Gastrocnemius medialis (tissue), 4 donors: ENCODE measurements at regions of chr17 and their contacts with region 1.

Region 1: DNA sequence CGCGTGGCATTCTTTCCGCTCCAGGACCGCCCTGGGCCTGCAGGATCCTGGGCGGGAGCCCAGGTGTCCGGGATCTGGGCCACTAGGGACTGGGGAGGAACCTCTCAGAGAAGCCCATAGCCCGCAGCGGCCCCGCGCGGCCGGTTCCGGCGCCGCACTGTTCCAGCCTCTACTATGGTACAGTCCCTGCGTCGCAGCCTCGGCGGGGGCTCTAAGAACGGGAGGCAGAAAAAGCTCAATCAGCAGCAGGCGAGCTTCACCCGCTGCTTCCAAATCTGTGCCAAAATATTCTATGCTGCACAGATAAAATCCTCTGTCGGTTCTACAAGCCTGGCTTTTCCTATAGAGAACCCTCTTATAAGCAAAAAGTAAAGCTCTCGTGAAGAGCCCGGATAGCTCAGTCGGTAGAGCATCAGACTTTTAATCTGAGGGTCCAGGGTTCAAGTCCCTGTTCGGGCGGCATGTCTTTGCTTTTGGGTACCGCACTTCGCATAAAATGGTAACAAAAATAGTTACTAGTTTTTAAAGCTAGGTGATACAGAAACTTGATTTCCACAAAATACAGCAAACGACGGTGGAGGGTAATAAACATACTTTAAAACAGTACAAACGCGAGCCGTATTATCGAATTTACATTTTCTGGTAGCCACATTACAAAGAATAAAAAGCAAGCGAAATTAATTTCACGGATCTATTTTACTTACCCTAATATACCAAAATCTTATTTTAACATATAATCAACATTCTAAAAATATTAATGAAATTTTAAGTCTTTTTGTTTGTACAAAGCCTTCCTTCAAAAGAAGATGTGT is 661 bp upstream of the ALOXE3 start:
- DNase-seq: peak; percentile 64 to 89
- ATAC-seq: peak; percentile 74 to 76
- H3K4me3 ChIP-seq: peak overlapping the region; percentile 49 to 63 (median 56)
- H3K27ac ChIP-seq: peak overlapping the region; percentile 76 to 87 (median 84)
- H3K4me1 ChIP-seq: peaks cover 41 to 49% of the 10 kb centered on the region in 2 donors
- H3K27me3 ChIP-seq: peaks cover 33 to 43% (median 38%) of the 10 kb centered on the region in 3 donors
- CTCF ChIP-seq: peak; percentile 89 to 94 (median 93)
- POLR2A ChIP-seq: no peak

Region 2: DNA sequence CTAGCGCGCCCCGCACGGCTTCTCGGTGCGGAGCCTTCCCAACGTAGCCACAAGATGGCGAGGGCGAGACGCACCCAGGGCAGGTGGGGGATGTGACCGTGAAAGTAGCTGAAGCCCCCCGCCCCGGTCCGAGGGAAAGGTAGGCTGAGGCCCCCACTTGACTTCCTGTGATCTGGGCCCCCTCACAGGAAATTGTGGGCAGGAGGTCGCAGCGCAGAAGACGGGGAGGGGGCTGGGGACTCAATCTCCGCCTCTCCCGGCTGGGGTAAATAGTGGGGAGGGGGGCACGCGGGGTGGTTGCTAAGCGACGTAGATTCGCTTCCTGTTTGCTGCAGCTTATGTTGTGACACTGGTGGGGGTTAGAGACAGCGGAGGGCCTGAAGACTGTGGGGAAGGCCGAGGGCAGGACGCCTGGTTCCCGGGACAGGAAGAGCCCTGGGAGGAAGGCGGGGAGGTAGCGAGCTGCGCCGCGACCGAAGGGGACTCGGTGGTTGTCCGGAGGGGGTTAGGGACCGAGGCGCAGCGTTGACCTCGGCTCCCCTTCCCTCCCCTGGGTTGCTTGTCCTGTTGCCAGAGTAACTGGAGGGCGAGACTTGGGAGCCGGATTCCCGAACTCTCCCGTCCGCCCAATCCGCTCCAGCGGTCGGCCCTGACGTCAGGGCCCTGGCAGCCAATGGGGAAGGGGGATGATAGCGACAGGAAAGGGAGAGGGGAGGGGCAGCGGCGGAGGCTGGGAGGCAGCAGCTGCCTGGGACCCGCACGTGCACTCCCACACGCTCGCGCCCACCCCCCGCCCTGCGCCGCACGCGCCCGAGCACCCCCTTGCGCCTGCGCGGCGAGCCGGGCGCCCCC is 283.8 kb before region 1 on chr17:
- in situ Hi-C with region 1: no loop called
- intact Hi-C with region 1: loop called (anchors 5 kb)
- DNase-seq: peak; percentile 97 to 98
- ATAC-seq: peak; percentile 65 to 74
- H3K4me3 ChIP-seq: peak overlapping the region; percentile 81 to 90 (median 85)
- H3K27ac ChIP-seq: peak overlapping the region; percentile 97 to 100 (median 100)
- H3K4me1 ChIP-seq: peaks cover 39 to 44% of the 10 kb centered on the region in 2 donors
- H3K27me3 ChIP-seq: no peaks in the 10 kb centered on the region
- CTCF ChIP-seq: peak; percentile 87 to 96 (median 88)
- POLR2A ChIP-seq: peak; percentile 84 to 94

Region 3: DNA sequence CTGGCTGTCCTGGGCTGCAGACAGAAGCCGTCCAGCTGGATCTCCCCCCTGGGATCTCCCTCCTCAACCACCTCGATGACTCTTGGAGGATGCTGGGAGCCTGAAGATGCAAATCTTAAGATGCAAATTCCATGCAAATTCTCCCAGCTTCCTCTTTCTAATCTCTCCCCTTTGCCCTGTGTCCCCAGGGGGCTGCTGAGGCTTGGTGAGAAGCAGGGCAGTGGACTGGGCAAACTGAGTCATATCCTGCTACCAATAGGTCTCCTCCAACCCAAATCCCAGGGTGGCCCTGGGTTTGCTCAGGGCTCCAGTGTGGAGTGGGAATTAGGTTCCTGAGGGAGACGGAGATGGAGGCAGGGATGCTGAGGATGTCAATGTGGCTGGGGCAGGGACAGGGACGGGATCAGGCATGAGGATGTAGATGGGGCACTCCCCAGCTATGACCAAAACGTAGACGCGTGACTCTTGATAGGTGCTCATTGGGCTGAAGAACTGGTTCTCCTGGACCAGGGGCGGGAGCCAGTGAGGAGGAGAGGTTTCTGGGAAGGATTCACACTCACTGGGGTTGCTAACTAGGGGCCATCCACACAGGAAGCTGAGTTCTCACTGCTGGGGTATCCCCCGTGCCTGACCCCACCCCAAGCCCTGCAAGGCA is 27.8 kb before region 1 on chr17:
- in situ Hi-C with region 1: no loop called
- intact Hi-C with region 1: loop called (anchors 1 kb)
- DNase-seq: no peak
- ATAC-seq: no peak
- H3K4me3 ChIP-seq: no peak overlapping the region
- H3K27ac ChIP-seq: no peak overlapping the region
- H3K4me1 ChIP-seq: no peaks in the 10 kb centered on the region
- H3K27me3 ChIP-seq: peaks cover 10 to 38% (median 30%) of the 10 kb centered on the region in 3 donors
- CTCF ChIP-seq: no peak
- POLR2A ChIP-seq: no peak

Region 4: GRCh38 chr17:8173056-8173870 is 54.3 kb after region 1 on chr17:
- in situ Hi-C with region 1: loop called in 1 of 4 experiments (anchors 10 kb)
- intact Hi-C with region 1: no loop called
- DNase-seq: peak; percentile 74 to 85
- ATAC-seq: peak; percentile 95 to 96
- H3K4me3 ChIP-seq: peak overlapping the region; percentile 29 to 54 (median 45)
- H3K27ac ChIP-seq: peak overlapping the region; percentile 77 to 91 (median 85)
- H3K4me1 ChIP-seq: peaks cover 8 to 25% of the 10 kb centered on the region in 2 donors
- H3K27me3 ChIP-seq: no peaks in the 10 kb centered on the region
- CTCF ChIP-seq: peak in 1 of 5 experiments; percentile 9
- POLR2A ChIP-seq: peak; percentile 99 to 100

Region 5: DNA sequence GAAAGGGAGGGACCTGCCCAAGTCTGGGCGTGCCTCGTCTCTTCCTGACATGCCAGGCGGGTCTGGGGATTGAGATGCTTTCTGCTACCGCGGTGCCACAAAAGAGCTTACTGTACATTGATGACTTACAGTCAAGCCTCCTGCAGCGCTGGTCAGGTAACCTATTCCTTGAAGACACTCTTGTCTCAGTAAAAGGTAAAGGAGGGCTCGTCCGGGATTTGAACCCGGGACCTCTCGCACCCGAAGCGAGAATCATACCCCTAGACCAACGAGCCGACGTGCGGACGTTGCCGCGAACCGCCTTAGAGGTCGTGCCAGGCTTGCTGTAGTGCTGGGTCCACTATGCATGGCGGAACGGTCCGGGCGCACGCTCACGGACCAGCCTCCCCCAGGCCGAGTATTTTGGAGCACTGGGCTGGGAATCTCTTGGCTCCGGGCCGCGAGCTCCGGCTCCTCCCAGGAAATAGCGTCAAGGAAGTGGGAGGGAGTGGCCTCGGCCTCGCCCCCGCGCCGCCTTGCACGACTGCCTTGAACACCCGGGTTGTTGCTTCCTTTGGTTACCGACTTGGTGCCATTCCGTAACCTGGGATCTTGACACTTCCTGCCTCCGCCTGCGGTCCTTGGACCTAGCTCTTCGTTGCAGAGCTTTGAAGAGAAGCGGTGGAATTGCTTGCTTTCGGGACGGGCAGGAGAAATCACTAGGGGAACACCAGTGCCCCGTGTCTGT is 103.8 kb after region 1 on chr17:
- in situ Hi-C with region 1: no loop called
- intact Hi-C with region 1: loop called (anchors 1 kb)
- DNase-seq: peak; percentile 88 to 95
- ATAC-seq: peak; percentile 51 to 55
- H3K4me3 ChIP-seq: peak overlapping the region; percentile 64 to 91 (median 67)
- H3K27ac ChIP-seq: peak overlapping the region; percentile 89 to 99 (median 94)
- H3K4me1 ChIP-seq: peaks cover 11 to 13% of the 10 kb centered on the region in 2 donors
- H3K27me3 ChIP-seq: no peaks in the 10 kb centered on the region
- CTCF ChIP-seq: no peak
- POLR2A ChIP-seq: peak; percentile 63 to 65

Region 6: DNA sequence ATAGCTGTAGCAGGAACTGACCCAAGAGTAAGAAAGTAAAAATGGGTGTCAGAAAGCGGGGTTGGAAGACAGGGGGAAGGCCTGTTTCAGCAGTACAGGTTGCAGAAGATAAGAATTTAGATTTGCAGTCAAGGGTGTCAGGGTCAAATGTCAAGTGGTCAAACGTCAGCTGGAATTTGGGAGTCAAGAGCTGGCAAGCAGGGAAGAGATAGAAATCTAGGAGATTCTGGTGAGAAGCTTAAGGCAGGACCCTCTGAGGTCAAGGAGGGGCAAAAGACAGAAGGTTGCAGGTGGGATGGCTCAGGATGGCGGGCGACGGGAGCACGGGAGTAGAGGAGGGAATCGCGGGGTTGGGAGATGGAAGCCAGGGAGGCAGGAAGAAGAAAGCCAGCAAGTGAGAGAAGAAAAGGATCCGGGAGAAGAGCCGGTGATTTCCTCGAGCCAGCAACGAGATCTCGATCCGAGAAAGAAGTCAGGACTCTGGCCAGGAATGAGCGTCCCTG is 175.9 kb after region 1 on chr17:
- in situ Hi-C with region 1: no loop called
- intact Hi-C with region 1: loop called (anchors 2 kb)
- DNase-seq: no peak
- ATAC-seq: peak; percentile 29 to 35
- H3K4me3 ChIP-seq: peak overlapping the region; percentile 72 to 90 (median 83)
- H3K27ac ChIP-seq: peak overlapping the region; percentile 95 to 97 (median 96)
- H3K4me1 ChIP-seq: peaks cover 9 to 11% of the 10 kb centered on the region in 2 donors
- H3K27me3 ChIP-seq: no peaks in the 10 kb centered on the region
- CTCF ChIP-seq: no peak
- POLR2A ChIP-seq: no peak